MCF 10A (cell line): ENCODE measurements at regions of chr13 and their contacts with region 1.

Region 1: DNA sequence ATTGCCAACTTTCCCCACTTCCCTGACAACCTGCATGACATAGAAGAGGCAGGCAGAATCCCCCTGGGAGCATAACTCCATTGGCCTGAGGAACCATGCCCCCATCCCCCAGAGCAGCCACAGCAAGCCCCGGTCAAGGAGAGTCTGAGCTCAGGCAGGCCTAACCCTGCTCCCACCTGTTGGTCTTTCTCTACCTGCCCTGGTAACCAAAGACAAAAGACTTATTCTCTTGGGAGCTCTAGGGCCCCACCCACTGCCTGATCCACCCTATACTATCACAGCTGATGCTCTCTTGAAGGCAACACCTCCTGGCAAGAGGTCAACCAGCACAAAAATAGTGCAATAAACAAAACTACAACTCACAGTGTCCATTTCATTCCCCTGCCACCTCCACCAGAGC is 59.3 kb downstream of the TNFSF13B start:
- DNase-seq: no peak
- H3K4me3 Mint-ChIP-seq: no peak overlapping the region
- H3K27ac Mint-ChIP-seq: no peak overlapping the region
- H3K4me1 Mint-ChIP-seq: no peaks in the 10 kb centered on the region
- H3K27me3 Mint-ChIP-seq: peaks cover 100% of the 10 kb centered on the region
- CTCF ChIP-seq: no peak

Region 2: DNA sequence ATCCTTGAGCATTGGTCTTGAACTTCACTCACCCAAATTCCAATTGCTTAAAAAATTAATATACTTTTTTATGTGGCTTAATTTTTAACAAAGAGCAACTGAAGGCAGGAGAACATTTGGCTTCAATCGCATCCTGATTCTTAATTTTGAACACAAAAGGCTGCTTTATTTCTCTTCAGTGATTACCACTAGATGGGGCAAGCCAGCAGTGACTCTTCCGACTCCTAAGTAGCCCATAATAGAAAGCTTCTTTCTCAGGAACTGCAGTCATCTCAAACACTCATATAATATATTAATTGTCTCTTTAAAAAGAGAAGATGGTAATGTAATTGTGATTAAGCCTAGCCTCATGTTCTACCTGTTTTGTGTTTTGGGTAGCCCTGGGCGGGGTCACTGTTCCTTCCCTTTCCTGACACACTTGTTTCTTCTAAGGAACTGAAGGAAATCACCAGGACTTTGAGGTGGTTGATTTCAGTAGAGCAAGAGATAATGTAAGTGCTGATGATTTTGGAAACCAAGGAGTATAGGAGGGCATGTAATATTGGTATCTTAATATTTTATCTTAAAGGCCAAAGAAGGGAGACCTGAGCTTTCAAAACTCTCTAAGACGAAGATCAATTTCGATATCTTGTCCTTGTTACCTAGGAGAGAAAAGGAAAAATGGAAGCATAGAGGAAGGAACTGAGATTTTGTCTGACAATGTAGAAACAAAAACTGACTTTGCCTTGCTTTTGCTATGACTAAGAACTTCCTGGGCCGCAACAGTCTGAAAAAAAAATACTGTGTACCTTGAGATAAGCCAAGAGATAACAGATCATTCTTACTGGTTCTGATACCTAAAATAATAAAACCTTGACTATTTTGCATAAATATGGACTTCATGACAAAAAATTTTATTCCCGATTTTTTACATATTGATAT is 13.8 kb after region 1 on chr13:
- CTCF ChIA-PET with region 1: interaction called, 10 read pairs
- POLR2A ChIA-PET with region 1: no interaction called
- intact Hi-C with region 1: no loop called
- DNase-seq: peak; percentile 52
- H3K4me3 Mint-ChIP-seq: no peak overlapping the region
- H3K27ac Mint-ChIP-seq: no peak overlapping the region
- H3K4me1 Mint-ChIP-seq: no peaks in the 10 kb centered on the region
- H3K27me3 Mint-ChIP-seq: peaks cover 90% of the 10 kb centered on the region
- CTCF ChIP-seq: peak; percentile 47